ENCODE measurements at regions of chr20 and their contacts with region 1.

Region 1: GRCh38 chr20:57089691-57090150 is 176.7 kb downstream of the BMP7 start:
- DNase-seq: peak; percentile 71
- ATAC-seq: peak; percentile 87
- H3K4me3 Mint-ChIP-seq: no peak overlapping the region
- H3K27ac Mint-ChIP-seq: no peak overlapping the region
- H3K4me1 Mint-ChIP-seq: no peaks in the 10 kb centered on the region
- H3K27me3 Mint-ChIP-seq: peaks cover 1% of the 10 kb centered on the region

Region 2: DNA sequence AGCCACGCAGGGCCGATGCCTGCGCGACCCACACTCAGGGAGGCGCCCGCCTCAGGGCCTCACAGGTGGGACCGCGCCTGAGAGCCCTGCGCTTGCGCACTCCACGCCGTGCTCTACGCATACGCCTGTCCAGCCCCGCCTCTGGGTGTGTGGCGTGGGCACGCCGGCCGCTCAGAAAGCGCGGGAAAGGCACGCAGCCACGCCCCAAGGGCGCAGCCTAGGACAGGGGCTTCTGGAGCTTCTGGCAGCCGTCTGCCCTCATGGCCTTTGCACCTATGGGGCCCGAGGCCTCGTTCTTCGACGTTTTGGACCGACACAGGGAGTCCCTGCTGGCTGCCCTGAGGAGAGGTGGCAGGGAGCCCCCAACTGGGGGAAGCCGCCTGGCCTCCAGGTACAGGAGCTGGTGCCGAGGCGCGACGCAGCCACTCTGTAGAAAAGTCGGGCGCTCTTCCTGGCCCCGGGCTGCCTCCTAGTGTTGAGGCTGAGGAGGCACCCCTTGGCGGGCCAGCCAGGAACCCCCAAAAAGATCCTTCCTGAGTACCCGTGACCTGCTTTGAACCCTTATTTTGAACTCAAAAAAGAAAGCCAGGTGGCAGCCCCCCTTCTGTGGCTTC is 240.0 kb after region 1 on chr20 and contains the start of gene SPO11:
- CTCF ChIA-PET with region 1: interaction called, 14 read pairs
- POLR2A ChIA-PET with region 1: no interaction called
- DNase-seq: no peak
- ATAC-seq: no peak
- H3K4me3 Mint-ChIP-seq: no peak within 1 kb of the TSS
- H3K27ac Mint-ChIP-seq: no peak within 1 kb of the TSS
- H3K4me1 Mint-ChIP-seq: no peaks in the 10 kb centered on the region
- H3K27me3 Mint-ChIP-seq: peaks cover 42% of the 10 kb centered on the region
- total RNA-seq, gene SPO11: not detected